KBM-7 (cell line): ENCODE measurements at regions of chr17 and their contacts with region 1.

Region 1: DNA sequence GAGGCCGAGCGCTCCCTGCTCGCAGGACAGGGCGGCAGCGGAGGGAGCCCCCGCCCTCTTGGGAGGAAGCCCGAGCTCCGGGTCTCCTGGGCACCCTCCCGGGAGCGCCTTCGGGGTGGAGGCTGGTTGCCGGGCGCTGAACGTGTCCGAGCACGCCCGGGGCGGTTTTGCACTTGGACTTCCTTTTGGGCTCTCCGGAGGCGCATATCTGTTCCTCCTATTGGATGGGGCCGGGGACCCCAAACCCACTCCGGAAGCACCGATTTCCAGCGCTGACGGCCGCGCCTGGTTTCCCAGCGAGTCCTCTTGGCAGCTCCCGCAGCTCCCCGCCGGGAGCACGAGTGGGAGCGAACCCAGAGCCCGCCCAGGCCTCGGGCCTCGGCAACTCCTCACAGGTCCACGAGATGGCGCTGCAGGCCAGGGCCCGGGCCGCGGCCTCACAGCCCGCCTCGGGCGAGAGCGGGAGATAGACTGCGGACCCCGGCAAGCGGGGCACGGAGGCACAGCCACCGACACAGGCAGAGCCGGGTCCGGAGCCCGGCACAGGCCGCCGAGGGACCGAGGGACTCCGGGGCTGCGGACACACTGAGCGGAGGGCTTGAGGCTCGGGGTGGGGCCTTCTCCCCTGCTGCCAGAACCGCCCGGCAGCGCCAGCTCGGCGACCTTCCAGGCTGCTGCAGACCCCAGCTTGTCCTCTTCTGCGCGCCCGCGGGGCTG is 12.7 kb downstream of the TBX2 start:
- DNase-seq: peak; percentile 90

Region 2: DNA sequence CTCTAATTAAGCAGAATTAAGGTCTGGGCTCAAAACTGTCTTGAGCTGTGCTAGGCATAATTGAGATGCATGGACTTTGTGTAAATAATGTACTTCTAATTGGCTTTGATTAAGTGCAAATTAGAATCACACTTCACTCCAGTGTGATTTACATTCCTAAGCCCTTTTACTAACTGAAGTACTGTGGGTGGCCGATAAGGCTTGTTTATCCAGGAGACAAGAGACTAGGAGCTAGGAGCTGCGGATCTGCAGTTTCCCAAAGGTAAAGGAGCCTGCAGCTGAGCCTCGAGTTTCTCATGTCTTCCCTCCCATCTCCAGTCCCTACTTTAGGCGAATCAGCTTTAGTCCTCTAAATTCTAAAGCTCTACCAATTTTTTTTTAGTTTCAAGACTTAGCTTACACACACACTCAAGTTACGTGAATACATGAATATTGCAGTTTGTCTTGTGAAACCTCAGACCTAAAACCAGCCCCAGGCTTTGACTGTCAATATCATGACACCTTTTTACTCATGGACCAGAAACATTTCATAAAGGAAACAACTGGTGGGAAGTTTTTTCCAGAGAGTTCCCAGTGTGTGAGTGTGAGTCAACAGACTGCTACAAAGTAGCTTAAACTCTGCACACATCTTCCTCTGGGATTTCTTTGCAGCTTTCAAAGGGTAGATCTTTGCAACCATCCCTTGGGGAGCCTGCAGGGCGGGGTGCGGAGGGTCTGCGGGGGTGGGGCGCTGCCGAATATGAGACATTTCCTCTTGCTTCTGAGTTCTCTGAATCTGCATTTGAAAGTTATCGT is 126.6 kb before region 1 on chr17:
- in situ Hi-C with region 1: no loop called
- DNase-seq: no peak

Region 3: GRCh38 chr17:61551255-61551742 is 139.0 kb after region 1 on chr17:
- in situ Hi-C with region 1: loop called (anchors 25 kb)
- DNase-seq: peak; percentile 70

Region 4: GRCh38 chr17:61837175-61838051 is 425.1 kb after region 1 on chr17:
- in situ Hi-C with region 1: loop called (anchors 25 kb)
- DNase-seq: peak; percentile 72